ENCODE measurements at regions of chr1 and their contacts with region 1.

Region 1: GRCh38 chr1:37807555-37808368 is at the starts of genes C1orf122 and YRDC:
- DNase-seq: peak; percentile 97 to 99
- ATAC-seq: peak; percentile 96
- H3K4me3 ChIP-seq: peak within 1 kb of the TSS; percentile 90 to 97
- H3K27ac ChIP-seq: peak within 1 kb of the TSS; percentile 24 to 83
- H3K4me1 ChIP-seq: no peaks in the 10 kb centered on the region
- H3K27me3 ChIP-seq: no peaks in the 10 kb centered on the region
- total RNA-seq, gene C1orf122: 34.0 to 35.0 TPM
- total RNA-seq, gene YRDC: 10.2 to 12.2 TPM

Region 2: GRCh38 chr1:36463803-36464604 is 1343.8 kb before region 1 on chr1 and contains the start of gene MRPS15:
- intact Hi-C with region 1: loop called in 1 of 2 experiments (anchors 10 kb)
- DNase-seq: peak; percentile 98 to 99
- ATAC-seq: peak; percentile 97
- H3K4me3 ChIP-seq: peak within 1 kb of the TSS; percentile 61 to 90
- H3K27ac ChIP-seq: peak within 1 kb of the TSS; percentile 62 to 75
- H3K4me1 ChIP-seq: no peaks in the 10 kb centered on the region
- H3K27me3 ChIP-seq: no peaks in the 10 kb centered on the region
- total RNA-seq, gene MRPS15: 34.7 to 37.0 TPM

Region 3: GRCh38 chr1:37692078-37692833 is 115.5 kb before region 1 on chr1 and contains the start of gene CDCA8:
- intact Hi-C with region 1: loop called (anchors 5 kb)
- DNase-seq: peak; percentile 99
- ATAC-seq: peak; percentile 97
- H3K4me3 ChIP-seq: peak within 1 kb of the TSS; percentile 55 to 57
- H3K27ac ChIP-seq: peak within 1 kb of the TSS in 1 of 2 donors; percentile 50
- H3K4me1 ChIP-seq: no peaks in the 10 kb centered on the region
- H3K27me3 ChIP-seq: no peaks in the 10 kb centered on the region
- total RNA-seq, gene CDCA8: 0.71 to 1.2 TPM

Region 4: DNA sequence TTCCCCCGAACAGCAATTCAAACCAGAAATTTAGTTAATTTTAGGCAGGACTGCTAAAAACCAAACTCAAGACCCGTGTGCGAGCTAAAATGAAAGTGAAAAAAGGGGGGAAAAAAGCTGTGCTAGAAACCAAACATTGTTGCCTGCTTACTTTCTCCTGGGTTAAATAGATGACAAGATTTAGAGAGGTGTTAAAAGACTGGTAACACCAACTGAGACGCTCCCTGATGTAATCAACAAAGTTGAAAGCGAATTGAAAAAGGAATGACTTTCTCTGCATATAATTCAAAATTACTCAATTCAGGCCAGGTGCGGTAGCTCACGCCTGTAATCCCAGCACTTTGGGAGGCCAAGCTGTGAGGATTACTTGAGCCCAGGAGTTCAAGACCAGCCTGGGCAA is 108.6 kb before region 1 on chr1:
- intact Hi-C with region 1: loop called (anchors 5 kb)
- DNase-seq: no peak
- ATAC-seq: no peak
- H3K4me3 ChIP-seq: no peak overlapping the region
- H3K27ac ChIP-seq: no peak overlapping the region
- H3K4me1 ChIP-seq: no peaks in the 10 kb centered on the region
- H3K27me3 ChIP-seq: no peaks in the 10 kb centered on the region

Region 5: GRCh38 chr1:37726751-37727585 is 80.8 kb before region 1 on chr1:
- intact Hi-C with region 1: no loop called
- DNase-seq: peak in 1 of 2 donors; percentile 63
- ATAC-seq: peak; percentile 23
- H3K4me3 ChIP-seq: no peak overlapping the region
- H3K27ac ChIP-seq: no peak overlapping the region
- H3K4me1 ChIP-seq: no peaks in the 10 kb centered on the region
- H3K27me3 ChIP-seq: peaks cover 0 to 1% of the 10 kb centered on the region in 2 donors

Region 6: DNA sequence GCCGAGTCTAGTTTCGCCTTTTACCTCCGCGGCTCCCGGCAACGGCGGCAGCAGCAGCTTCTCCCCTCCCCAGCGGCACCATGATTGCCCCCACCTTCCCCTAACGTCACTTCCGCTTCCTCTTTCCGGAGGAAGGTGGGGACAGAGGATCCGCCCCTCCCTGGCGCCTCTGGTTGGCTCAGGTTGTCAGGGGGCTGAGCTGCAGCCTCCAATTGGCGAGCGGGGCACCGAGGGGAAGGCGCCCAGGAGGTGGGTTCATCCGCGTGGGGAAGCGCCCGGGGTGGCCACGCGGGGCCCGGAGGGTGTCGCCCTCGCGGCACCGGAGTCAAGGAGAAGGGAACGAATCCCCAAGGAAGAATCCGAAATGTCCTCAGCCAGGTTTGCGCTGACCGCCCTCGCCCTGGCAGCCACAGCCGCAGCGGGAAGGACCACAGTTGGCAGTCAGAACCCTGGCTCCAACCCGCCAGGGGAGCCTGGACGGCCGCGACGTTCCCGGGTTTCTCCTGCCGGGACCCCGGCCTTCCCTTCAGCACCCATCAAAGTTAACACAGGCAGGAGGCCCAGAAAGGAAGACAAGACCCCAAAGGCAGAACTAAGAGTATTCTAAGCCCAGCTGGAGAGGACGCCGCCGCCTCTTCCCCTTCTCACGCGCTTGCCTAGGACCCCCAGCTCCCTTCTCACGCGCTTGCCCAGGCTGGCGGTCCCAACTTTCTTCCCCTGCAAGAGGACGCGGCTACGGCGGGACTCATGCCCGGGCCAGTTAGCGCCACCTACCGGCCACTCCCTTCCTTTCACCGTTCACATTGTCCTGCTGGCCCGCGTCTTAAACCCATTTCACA is 52.0 kb after region 1 on chr1 and contains the start of gene MTF1:
- intact Hi-C with region 1: loop called (anchors 2 to 5 kb)
- DNase-seq: peak; percentile 98 to 99
- ATAC-seq: peak; percentile 99
- H3K4me3 ChIP-seq: peak within 1 kb of the TSS; percentile 80 to 86
- H3K27ac ChIP-seq: peak within 1 kb of the TSS in 1 of 2 donors; percentile 37
- H3K4me1 ChIP-seq: no peaks in the 10 kb centered on the region
- H3K27me3 ChIP-seq: no peaks in the 10 kb centered on the region
- total RNA-seq, gene MTF1: 21.0 to 23.5 TPM